GM10248 (cell line): ENCODE measurements at regions of chr2 and their contacts with region 1.

Region 1: GRCh38 chr2:42828487-42829425 is 36.4 kb upstream of the HAAO start:
- DNase-seq: peak; percentile 88
- CTCF ChIP-seq: peak; percentile 76

Region 2: GRCh38 chr2:42839809-42840501 is 11.2 kb after region 1 on chr2:
- CTCF ChIA-PET with region 1: interaction called, 21 read pairs
- POLR2A ChIA-PET with region 1: no interaction called
- DNase-seq: no peak
- CTCF ChIP-seq: no peak

Region 3: GRCh38 chr2:42967959-42968674 is 139.4 kb after region 1 on chr2:
- CTCF ChIA-PET with region 1: no interaction called
- POLR2A ChIA-PET with region 1: no interaction called
- DNase-seq: no peak
- CTCF ChIP-seq: no peak

Region 4: DNA sequence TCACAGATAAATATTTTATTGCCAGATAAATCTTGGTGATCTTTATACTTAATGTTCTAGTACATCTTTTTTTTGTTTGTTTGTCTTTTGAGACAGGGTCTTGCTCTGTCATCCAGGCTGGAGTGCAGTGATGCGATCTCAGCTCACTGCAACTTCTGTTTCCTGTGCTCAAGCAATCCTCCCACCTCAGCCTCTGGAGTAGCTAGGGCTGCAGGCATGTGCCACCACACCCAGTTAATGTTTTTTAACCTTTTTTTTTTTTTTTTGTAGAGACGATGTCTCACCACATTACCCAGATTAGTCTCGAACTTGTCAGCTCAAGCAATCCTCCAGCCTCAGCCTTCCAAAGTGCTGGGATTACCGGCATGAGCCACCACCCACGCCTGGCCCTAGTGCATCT is 856.6 kb after region 1 on chr2:
- CTCF ChIA-PET with region 1: no interaction called
- POLR2A ChIA-PET with region 1: no interaction called
- DNase-seq: no peak
- CTCF ChIP-seq: no peak